PC-9 (cell line): ENCODE measurements at regions of chr19 and their contacts with region 1.

Region 1: DNA sequence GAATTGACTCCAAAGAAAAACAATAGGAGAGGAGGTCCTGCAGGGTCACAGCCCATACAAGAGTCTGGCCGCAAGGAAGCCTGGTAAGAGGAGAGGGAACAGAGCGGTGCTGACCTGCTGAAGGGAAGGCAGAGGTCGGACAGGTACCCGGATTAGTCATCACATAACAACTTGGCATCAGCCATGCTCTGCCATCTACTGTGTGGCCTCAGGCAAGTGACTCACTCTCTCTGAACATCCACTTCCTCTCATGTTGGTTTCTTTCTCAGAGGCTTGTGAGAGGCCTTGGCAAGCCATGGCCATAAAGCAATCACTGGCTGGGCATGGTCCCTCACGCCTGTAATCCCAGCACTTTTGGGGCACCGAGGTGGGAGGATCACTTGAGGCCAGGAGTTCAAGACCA is 7.4 kb upstream of the CAPNS1 start:
- DNase-seq: peak; percentile 88 to 99
- H3K4me3 ChIP-seq: no peak overlapping the region
- H3K27ac ChIP-seq: peak overlapping the region; percentile 82
- H3K4me1 ChIP-seq: peaks cover 64% of the 10 kb centered on the region
- H3K27me3 ChIP-seq: no peaks in the 10 kb centered on the region
- CTCF ChIP-seq: no peak

Region 2: GRCh38 chr19:35995048-35995993 is 137.2 kb before region 1 on chr19 and contains the start of gene SDHAF1:
- CTCF ChIA-PET with region 1: no interaction called
- POLR2A ChIA-PET with region 1: interaction called, 5 read pairs
- intact Hi-C with region 1: loop called (anchors 5 kb)
- DNase-seq: peak; percentile 86 to 93
- H3K4me3 ChIP-seq: peak within 1 kb of the TSS; percentile 97
- H3K27ac ChIP-seq: 0 out of 2 replicates have a peak within 1 kb of the TSS, but pooled peaks have one; percentile 23
- H3K4me1 ChIP-seq: peaks cover 8% of the 10 kb centered on the region; the same call in 1 of the 2 replicates
- H3K27me3 ChIP-seq: no peaks in the 10 kb centered on the region
- CTCF ChIP-seq: no peak
- total RNA-seq, gene SDHAF1: 16.9 and 22.4 TPM in 2 replicates

Region 3: DNA sequence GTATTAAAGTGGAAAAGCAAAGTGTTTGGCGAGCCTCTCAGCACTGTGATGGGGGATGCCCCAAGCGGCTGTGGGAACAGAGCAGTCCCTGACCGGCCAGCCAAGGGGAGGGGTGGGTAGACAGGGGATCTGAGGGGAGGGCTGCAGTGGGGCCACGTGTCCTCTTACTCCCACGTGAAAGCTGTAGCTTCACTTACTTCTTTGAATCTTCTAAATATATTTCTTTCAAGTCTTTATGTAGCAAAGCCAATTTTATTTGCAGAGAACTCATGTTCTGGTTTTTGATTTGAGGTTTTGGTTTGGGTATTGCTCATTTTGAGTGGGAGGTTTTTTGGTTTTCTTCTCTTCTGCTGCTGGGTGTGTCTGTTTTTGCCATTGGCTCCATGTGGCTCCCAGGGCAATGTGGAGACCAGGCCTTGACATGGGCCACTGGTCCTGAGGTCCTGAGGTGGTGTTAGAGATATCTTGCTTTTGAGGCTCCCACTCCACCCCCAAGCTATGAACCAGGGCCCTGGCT is 39.3 kb before region 1 on chr19:
- CTCF ChIA-PET with region 1: no interaction called
- POLR2A ChIA-PET with region 1: no interaction called
- intact Hi-C with region 1: no loop called
- DNase-seq: no peak
- H3K4me3 ChIP-seq: no peak overlapping the region
- H3K27ac ChIP-seq: no peak overlapping the region
- H3K4me1 ChIP-seq: no peaks in the 10 kb centered on the region
- H3K27me3 ChIP-seq: no peaks in the 10 kb centered on the region
- CTCF ChIP-seq: no peak

Region 4: DNA sequence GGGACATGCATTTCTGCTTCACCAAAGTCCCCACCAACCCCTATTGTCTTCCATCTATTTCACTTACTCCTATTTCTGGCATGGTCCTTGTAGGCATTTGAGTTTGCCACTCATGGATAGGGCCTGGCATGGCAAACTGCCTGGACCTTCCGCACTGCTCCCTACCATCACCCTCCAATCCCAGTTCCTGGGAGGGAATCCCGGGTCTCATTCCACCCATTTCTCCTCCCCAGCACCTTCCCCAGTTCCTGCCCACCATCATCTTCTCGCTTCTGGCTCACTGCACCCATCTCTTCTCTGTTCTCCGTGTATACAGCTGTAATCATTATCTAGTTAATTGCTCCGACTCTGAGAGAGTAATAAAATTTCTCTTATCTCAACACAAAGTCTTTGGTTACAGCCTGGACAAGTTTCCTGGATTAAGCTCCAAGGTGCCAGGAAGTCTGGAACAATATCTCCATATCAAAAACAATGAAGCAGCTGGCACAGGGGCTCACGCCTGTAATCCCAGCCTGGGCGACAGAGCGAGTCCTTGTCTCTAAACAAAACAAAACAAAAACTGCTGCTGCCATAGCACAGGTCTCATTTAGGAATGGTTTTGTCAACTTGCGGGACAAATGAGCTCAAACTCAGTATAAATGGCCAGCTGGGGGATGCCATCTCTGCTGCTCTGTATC is 36.7 kb after region 1 on chr19:
- CTCF ChIA-PET with region 1: interaction called, 35 read pairs
- POLR2A ChIA-PET with region 1: interaction called, 9 read pairs
- intact Hi-C with region 1: loop called (anchors 1 kb)
- DNase-seq: no peak
- H3K4me3 ChIP-seq: no peak overlapping the region
- H3K27ac ChIP-seq: no peak overlapping the region
- H3K4me1 ChIP-seq: no peaks in the 10 kb centered on the region
- H3K27me3 ChIP-seq: no peaks in the 10 kb centered on the region
- CTCF ChIP-seq: no peak

Region 5: GRCh38 chr19:36489118-36489919 is 356.8 kb after region 1 on chr19 and contains the start of gene ZNF566:
- CTCF ChIA-PET with region 1: no interaction called
- POLR2A ChIA-PET with region 1: interaction called, 4 read pairs
- intact Hi-C with region 1: loop called (anchors 5 kb)
- DNase-seq: peak; percentile 94 to 95
- H3K4me3 ChIP-seq: peak within 1 kb of the TSS; percentile 87
- H3K27ac ChIP-seq: peak within 1 kb of the TSS; percentile 96
- H3K4me1 ChIP-seq: peaks cover 6% of the 10 kb centered on the region; the same call in 1 of the 2 replicates
- H3K27me3 ChIP-seq: no peaks in the 10 kb centered on the region
- CTCF ChIP-seq: no peak
- total RNA-seq, gene ZNF566: 6.0 and 7.9 TPM in 2 replicates

Region 6: DNA sequence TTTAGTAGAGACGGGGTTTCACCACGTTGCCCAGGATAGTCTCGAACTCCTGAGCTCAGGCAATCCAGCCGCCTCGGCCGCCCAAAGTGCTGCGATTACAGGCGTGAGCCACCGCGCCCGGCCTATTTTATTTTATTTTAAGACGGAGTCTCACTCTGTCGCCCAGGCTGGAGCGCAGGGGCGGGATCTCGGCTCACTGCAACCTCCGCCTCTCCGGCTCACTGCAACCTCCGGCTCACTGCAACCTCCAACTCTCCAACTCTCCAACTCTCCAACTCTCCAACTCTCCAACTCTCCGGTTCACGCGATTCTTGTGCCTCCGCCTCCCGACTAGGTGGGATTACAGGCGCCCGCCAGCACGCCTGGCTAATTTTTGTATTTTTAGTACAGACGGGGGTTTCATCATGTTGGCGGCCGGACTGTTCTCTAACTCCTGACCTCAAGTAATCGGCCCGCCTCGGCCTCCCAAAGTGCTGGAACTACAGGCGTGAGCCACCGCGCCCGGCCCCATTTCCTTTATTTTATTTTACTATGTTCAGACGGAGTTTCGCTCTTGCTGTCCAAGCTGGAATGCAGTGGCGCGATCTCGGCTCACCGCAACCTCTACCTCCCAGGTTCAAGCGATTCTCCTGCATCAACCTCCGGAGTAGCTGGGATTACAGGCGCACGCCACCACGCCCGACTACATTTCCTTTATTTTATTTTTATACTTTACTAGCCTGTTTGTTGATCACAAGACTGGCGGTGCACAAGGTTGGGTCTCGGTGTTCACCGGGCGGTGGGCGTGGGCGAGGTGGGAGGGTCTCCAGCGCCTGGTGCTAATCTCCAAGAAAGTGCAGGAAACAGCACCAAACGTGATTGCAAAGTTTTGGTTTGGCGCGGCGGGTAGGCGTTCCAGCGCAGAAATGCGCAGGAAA is 663.8 kb after region 1 on chr19:
- CTCF ChIA-PET with region 1: no interaction called
- POLR2A ChIA-PET with region 1: no interaction called
- intact Hi-C with region 1: loop called (anchors 5 kb)
- DNase-seq: no peak
- H3K4me3 ChIP-seq: peak overlapping the region; percentile 51; the same call in 1 of the 2 replicates
- H3K27ac ChIP-seq: no peak overlapping the region
- H3K4me1 ChIP-seq: no peaks in the 10 kb centered on the region
- H3K27me3 ChIP-seq: no peaks in the 10 kb centered on the region
- CTCF ChIP-seq: no peak